Activated CD8-positive, alpha-beta memory T cell treated with anti-CD3 and anti-CD28 coated beads, Interleukin-2, amount 10 ng/mL, durations not matched to agents 7 days and 5 days (primary cell): ENCODE measurements at regions of chrX and their contacts with region 1.

Region 1: DNA sequence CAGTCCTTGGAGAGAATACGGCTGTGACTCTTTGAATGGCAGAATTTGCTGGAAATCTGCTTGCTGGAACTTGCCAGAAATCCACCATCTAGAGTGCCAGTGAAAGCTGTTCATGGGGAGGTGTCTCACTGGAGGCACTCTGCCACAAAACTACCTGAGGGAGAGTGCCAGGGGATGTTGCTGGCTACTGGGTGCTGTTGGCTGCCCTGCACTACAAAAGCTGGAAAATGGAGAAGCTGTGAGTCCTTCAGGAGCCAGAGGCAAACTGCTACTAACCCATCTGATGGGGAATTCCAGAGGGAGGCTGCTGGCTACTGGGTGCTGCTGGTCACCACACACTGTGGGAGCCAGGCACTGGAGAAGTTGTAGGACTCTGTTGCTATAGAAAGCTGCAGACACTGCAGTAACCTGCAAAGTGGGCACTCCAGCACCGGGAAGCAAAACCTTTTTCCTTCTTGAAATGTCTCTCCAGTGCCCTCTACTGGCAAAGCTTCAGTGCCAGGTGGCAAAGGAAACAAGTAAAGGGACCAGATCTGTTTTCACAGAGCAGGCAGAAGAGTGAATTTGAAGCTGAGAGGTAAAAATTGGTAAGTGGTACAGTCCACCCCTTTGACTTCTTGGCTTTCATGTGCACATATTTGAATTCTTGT is 47.8 kb upstream of the HSD17B10 start:
- DNase-seq: peak; percentile 64
- ATAC-seq: peak; percentile 47
- H3K4me3 Mint-ChIP-seq: no peak overlapping the region
- H3K27ac Mint-ChIP-seq: no peak overlapping the region
- H3K4me1 Mint-ChIP-seq: no peaks in the 10 kb centered on the region
- H3K27me3 Mint-ChIP-seq: peaks cover 5% of the 10 kb centered on the region

Region 2: DNA sequence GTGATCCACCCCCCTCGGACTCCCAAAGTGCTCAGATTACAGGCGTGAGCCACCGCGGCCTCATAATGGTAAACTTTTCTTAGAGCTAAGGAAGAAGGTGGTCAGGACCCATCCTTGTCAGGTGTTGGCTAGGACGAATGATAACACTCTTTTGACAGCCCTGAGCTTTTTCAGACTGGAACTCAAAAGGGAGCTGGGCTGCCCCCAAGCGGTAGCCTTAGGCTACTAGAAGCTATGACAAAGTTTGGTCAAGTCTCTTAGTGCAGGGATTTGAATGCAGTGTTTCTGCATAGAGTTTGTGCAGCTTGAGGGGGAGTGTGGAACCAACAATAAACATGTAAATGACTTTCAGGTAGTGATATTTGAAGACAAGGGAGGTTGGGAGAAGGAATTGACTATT is 36.0 kb before region 1 on chrX:
- CTCF ChIA-PET with region 1: interaction called, 10 read pairs
- DNase-seq: peak; percentile 68
- ATAC-seq: peak; percentile 49
- H3K4me3 Mint-ChIP-seq: no peak overlapping the region
- H3K27ac Mint-ChIP-seq: no peak overlapping the region
- H3K4me1 Mint-ChIP-seq: peaks cover 4% of the 10 kb centered on the region
- H3K27me3 Mint-ChIP-seq: no peaks in the 10 kb centered on the region

Region 3: DNA sequence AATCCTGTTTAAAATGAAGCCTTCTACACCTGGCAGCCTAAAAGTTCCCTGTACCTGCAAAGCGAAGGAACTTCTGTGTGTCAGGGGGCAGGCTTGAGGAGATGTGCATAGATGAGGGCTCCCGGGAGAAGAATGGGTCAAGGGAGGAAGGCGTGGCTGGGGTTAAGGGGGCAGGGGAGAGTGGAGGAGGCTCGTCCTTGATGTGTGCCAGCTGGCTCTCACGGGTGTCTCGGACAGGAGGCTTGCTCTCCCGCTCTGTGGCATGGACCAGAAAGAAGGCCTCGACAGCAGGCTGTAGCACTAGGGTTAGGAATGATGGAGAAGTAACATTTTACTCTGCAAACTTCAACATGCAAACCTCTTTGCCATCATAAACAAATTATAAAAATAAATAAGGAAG is 56.8 kb after region 1 on chrX:
- CTCF ChIA-PET with region 1: no interaction called
- DNase-seq: no peak
- ATAC-seq: no peak
- H3K4me3 Mint-ChIP-seq: no peak overlapping the region
- H3K27ac Mint-ChIP-seq: no peak overlapping the region
- H3K4me1 Mint-ChIP-seq: no peaks in the 10 kb centered on the region
- H3K27me3 Mint-ChIP-seq: no peaks in the 10 kb centered on the region